A673 (cell line): ENCODE measurements at regions of chr18 and their contacts with region 1.

Region 1: GRCh38 chr18:63439334-63439733 is 17.1 kb upstream of the VPS4B start:
- DNase-seq: peak; percentile 87
- H3K4me3 ChIP-seq: no peak overlapping the region
- H3K27ac ChIP-seq: peak overlapping the region; percentile 71
- H3K4me1 ChIP-seq: peaks cover 19% of the 10 kb centered on the region
- H3K27me3 ChIP-seq: no peaks in the 10 kb centered on the region
- CTCF ChIP-seq: peak; percentile 87

Region 2: GRCh38 chr18:62165583-62165982 is 1273.8 kb before region 1 on chr18:
- CTCF ChIA-PET with region 1: no interaction called
- POLR2A ChIA-PET with region 1: interaction called, 13 read pairs
- intact Hi-C with region 1: no loop called
- DNase-seq: no peak
- H3K4me3 ChIP-seq: no peak overlapping the region
- H3K27ac ChIP-seq: no peak overlapping the region
- H3K4me1 ChIP-seq: no peaks in the 10 kb centered on the region
- H3K27me3 ChIP-seq: no peaks in the 10 kb centered on the region
- CTCF ChIP-seq: no peak

Region 3: DNA sequence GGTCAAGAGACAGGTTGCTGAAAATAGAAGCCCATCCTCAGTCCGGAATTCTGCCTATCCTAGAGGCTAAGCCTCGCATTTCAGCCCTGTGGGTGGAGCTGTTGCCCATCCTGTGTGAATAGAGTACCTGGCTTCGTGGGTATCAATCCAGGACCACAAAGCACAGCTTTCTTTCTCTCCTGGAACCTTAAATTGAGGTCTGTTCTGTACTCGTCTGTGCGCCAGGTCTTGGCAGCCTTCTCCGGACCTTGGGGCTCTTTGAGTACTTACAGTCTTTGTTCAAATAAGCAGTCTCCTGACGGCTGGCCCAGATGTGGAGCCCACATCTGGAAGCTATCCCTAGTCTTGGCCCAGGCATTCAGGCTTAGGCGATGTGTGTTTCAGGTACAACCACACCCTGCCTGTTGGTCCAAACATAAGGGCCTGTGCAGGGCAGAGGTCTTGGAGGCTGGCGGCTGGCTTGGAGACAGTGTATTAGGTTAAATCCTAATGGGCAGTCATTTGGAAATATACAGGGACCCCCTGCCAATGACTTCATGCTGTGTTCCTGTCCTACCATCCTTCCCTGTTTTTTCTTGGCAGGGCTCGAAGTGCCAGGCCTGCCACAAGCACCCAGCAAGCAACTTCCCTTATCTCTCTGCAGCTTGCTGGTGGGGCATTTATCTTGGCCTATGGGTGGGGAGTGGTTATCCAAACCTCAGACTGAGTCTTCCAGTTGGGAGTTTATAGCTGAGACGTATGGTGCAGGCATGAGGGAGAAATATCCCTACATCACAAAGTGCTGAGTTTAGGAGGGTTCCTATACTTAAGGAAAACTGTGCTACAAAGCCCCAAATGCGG is 413.9 kb before region 1 on chr18:
- CTCF ChIA-PET with region 1: no interaction called
- POLR2A ChIA-PET with region 1: no interaction called
- intact Hi-C with region 1: loop called (anchors 2 kb)
- DNase-seq: peak; percentile 63
- H3K4me3 ChIP-seq: no peak overlapping the region
- H3K27ac ChIP-seq: no peak overlapping the region
- H3K4me1 ChIP-seq: peaks cover 3% of the 10 kb centered on the region
- H3K27me3 ChIP-seq: no peaks in the 10 kb centered on the region
- CTCF ChIP-seq: peak; percentile 67

Region 4: GRCh38 chr18:63320046-63320689 is 119.2 kb before region 1 on chr18:
- CTCF ChIA-PET with region 1: interaction called, 3 read pairs
- POLR2A ChIA-PET with region 1: no interaction called
- intact Hi-C with region 1: loop called (anchors 5 kb)
- DNase-seq: peak; percentile 92
- H3K4me3 ChIP-seq: peak overlapping the region; percentile 74
- H3K27ac ChIP-seq: peak overlapping the region; percentile 89
- H3K4me1 ChIP-seq: peaks cover 30% of the 10 kb centered on the region
- H3K27me3 ChIP-seq: no peaks in the 10 kb centered on the region
- CTCF ChIP-seq: no peak

Region 5: GRCh38 chr18:63378919-63379638 is 60.3 kb before region 1 on chr18:
- CTCF ChIA-PET with region 1: no interaction called
- POLR2A ChIA-PET with region 1: no interaction called
- intact Hi-C with region 1: loop called (anchors 1 kb)
- DNase-seq: no peak
- H3K4me3 ChIP-seq: no peak overlapping the region
- H3K27ac ChIP-seq: peak overlapping the region; percentile 95
- H3K4me1 ChIP-seq: peaks cover 31% of the 10 kb centered on the region
- H3K27me3 ChIP-seq: no peaks in the 10 kb centered on the region
- CTCF ChIP-seq: no peak